Endothelial cell of umbilical vein (primary cell): ENCODE measurements at regions of chr9 and their contacts with region 1.

Region 1: DNA sequence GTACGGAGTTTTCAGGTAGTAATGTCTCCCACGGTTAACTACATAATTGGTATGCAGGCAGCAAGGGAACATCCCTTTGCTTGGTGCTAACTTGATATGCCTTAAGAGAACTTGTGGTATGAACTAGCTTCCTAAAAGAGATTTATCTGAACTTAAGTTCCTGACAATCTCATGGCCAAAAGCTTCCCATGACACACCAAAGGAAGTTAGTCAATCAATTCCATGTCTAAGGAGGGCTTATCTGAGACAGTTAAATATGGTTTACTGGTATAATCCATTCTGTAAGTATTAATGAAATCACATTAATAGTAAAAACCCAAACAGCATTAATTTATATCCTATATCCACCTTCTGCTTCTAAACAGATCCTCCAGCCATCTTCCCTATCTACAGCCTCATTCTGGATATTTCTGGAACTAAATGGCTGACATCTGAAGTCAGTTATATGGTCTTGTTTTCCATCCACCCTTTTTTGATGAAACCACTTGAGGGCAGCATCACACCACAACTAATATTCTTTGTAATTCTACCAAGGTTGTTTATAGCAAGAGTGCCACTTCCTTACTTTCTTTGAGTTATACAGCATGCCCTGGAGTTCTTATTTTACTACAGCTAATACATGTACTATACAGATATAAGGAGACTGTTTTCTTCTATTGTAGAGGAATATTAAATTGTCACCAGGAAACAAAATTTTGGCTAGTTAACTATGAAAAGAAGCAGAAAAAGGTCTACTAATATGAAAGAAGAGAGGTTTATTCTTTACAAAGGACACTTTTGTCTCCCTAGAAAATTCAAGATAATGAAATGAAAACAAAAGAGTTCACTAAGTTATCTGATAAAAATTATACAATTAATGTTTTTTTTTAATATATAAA is 34.7 kb downstream of the SHOC1 start:
- DNase-seq: peak; percentile 95
- H3K4me3 ChIP-seq: no peak overlapping the region
- H3K27ac ChIP-seq: peak overlapping the region; percentile 51
- H3K4me1 ChIP-seq: peaks cover 12% of the 10 kb centered on the region
- H3K27me3 ChIP-seq: no peaks in the 10 kb centered on the region
- CTCF ChIP-seq: peak; percentile 38 to 40
- POLR2A ChIP-seq: no peak

Region 2: GRCh38 chr9:111828193-111828592 is 68.2 kb after region 1 on chr9:
- CTCF ChIA-PET with region 1: no interaction called
- POLR2A ChIA-PET with region 1: no interaction called
- dilution Hi-C with region 1: no loop called
- intact Hi-C with region 1: loop called (anchors 5 kb)
- DNase-seq: peak; percentile 37
- H3K4me3 ChIP-seq: no peak overlapping the region
- H3K27ac ChIP-seq: no peak overlapping the region
- H3K4me1 ChIP-seq: no peaks in the 10 kb centered on the region
- H3K27me3 ChIP-seq: no peaks in the 10 kb centered on the region
- CTCF ChIP-seq: no peak
- POLR2A ChIP-seq: no peak

Region 3: DNA sequence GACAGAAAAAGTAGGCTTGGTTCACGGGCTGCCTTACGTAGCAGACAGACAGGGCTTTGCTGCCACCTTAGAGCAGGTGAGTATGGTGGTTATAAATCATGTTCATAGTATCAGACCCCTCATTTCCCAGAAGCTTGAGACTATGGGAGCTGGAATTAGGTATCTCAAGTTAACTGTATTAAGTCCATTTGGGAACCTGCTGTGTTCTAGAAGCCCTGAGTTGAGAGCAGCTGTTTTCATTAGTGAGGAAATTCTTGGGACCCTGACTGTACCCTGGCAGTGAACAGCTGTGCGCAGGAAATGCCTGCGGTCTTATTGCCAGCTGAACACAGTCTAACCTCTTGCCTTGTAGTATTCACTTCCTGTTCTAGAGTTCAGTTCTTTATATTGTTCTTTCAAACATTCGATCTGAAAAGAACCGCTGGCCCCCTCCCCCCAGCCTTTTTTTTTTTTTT is 166.4 kb after region 1 on chr9:
- CTCF ChIA-PET with region 1: interaction called, 5 read pairs
- POLR2A ChIA-PET with region 1: no interaction called
- dilution Hi-C with region 1: no loop called
- intact Hi-C with region 1: loop called (anchors 1 kb)
- DNase-seq: peak; percentile 95
- H3K4me3 ChIP-seq: no peak overlapping the region
- H3K27ac ChIP-seq: peak overlapping the region; percentile 99
- H3K4me1 ChIP-seq: peaks cover 39% of the 10 kb centered on the region
- H3K27me3 ChIP-seq: no peaks in the 10 kb centered on the region
- CTCF ChIP-seq: no peak
- POLR2A ChIP-seq: no peak

Region 4: DNA sequence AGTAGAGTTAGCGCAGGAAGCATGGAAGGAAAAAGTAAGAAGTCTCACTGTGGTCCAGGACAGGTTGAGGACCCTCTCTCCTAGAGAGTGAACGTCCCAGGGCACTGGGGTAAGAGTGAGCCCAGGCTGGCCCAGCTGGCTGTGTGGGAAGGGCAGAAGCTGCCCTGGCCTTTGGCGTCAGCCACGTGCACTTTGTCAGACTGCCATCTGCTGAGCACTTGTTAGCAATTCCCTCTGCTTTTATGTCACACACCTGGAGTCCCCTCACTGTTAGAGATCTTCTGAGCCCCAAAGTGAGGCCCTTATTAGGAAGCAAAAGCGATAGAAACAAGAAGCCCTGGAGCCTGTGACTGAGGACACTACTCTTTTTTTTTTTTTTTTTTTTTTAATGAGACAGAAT is 215.7 kb after region 1 on chr9:
- CTCF ChIA-PET with region 1: interaction called, 3 read pairs
- POLR2A ChIA-PET with region 1: no interaction called
- dilution Hi-C with region 1: no loop called
- intact Hi-C with region 1: loop called (anchors 2 kb)
- DNase-seq: no peak
- H3K4me3 ChIP-seq: no peak overlapping the region
- H3K27ac ChIP-seq: no peak overlapping the region
- H3K4me1 ChIP-seq: peaks cover 10% of the 10 kb centered on the region
- H3K27me3 ChIP-seq: no peaks in the 10 kb centered on the region
- CTCF ChIP-seq: no peak
- POLR2A ChIP-seq: no peak

Region 5: GRCh38 chr9:112061152-112061740 is 301.2 kb after region 1 on chr9:
- CTCF ChIA-PET with region 1: interaction called, 7 read pairs
- POLR2A ChIA-PET with region 1: no interaction called
- dilution Hi-C with region 1: no loop called
- intact Hi-C with region 1: loop called (anchors 1 kb)
- DNase-seq: peak; percentile 98
- H3K4me3 ChIP-seq: no peak overlapping the region
- H3K27ac ChIP-seq: peak overlapping the region; percentile 97
- H3K4me1 ChIP-seq: peaks cover 35% of the 10 kb centered on the region
- H3K27me3 ChIP-seq: no peaks in the 10 kb centered on the region
- CTCF ChIP-seq: no peak
- POLR2A ChIP-seq: peak; percentile 27

Region 6: DNA sequence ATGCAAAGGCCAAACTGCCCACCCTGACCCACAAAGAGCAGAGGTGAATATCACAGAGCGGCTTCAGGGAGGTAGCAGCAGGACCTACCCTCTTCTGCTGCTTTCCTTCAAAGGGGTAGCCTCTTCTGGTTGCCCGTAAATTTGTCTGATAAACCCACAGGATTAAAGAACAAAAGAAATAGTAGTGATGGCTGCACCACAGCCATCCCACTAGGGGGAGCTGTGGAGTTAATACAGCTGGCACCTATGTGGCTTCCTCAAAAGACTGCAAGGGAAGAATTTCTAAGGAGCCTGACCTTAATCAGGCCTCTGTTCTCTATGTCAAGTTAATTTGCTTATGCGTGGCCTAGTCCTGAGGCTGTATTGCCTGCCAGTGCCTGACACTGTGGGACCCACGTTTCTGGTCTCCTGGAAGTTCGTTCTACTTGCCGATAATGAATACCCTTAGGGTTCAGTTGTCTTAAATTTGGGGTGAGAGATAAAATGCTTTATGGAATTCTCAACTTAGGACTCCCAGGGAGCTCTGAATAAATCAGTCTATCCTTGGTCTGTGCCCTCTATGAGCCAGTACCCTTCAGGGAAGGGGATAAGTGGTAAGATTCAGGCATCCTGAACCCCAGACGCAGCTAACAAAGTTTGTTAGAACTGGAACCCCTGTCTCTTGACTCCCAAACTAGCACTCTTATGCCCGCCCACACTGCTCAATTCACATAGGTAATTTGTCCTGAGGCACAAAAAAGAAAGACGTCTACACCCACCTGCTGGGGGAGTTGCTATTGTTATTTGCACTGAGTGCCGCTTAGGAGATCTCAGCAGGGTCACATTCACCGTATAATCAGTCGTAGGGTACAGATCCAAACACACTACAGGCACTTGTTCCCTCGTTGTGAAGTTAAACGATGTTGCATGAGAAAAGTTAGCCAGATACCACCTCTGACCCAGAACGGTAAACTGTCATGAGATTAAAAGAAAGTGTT is 338.0 kb after region 1 on chr9:
- CTCF ChIA-PET with region 1: interaction called, 15 read pairs
- POLR2A ChIA-PET with region 1: no interaction called
- dilution Hi-C with region 1: no loop called
- intact Hi-C with region 1: no loop called
- DNase-seq: peak; percentile 76
- H3K4me3 ChIP-seq: no peak overlapping the region
- H3K27ac ChIP-seq: no peak overlapping the region
- H3K4me1 ChIP-seq: no peaks in the 10 kb centered on the region
- H3K27me3 ChIP-seq: no peaks in the 10 kb centered on the region
- CTCF ChIP-seq: peak; percentile 83 to 85
- POLR2A ChIP-seq: no peak

Region 7: DNA sequence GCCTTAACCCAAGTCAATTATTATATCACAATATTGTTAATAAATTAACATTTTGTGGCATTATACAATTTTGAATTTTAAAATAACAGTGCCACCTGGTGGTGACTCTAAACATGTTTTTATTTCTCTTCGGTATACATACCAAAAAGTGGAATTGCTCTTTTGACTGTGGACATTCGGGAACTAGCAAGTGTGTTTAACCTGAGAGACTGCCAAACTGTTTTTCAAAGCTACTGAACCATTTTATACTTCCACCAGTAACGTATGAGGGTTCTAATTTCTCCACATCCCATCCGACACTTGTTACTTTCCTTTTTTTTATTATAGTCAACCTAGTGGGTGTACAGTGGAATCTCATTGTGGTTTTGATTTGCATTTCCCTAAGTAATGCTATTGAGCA is 601.6 kb after region 1 on chr9:
- CTCF ChIA-PET with region 1: interaction called, 12 read pairs
- POLR2A ChIA-PET with region 1: no interaction called
- dilution Hi-C with region 1: no loop called
- intact Hi-C with region 1: loop called (anchors 1 kb)
- DNase-seq: peak; percentile 55
- H3K4me3 ChIP-seq: no peak overlapping the region
- H3K27ac ChIP-seq: no peak overlapping the region
- H3K4me1 ChIP-seq: peaks cover 4% of the 10 kb centered on the region
- H3K27me3 ChIP-seq: no peaks in the 10 kb centered on the region
- CTCF ChIP-seq: peak in 1 of 2 donors; percentile 10
- POLR2A ChIP-seq: no peak